Lower leg skin (tissue), 4 donors: ENCODE measurements at regions of chr3 and their contacts with region 1.

Region 1: GRCh38 chr3:66348704-66349103 is 127.9 kb downstream of the SLC25A26 start:
- DNase-seq: no peak
- H3K4me3 ChIP-seq: no peak overlapping the region
- CTCF ChIP-seq: no peak
- POLR2A ChIP-seq: no peak

Region 2: GRCh38 chr3:66253790-66254620 is 94.7 kb before region 1 on chr3:
- intact Hi-C with region 1: no loop called
- DNase-seq: no peak
- H3K4me3 ChIP-seq: no peak overlapping the region
- CTCF ChIP-seq: no peak
- POLR2A ChIP-seq: no peak

Region 3: GRCh38 chr3:68049776-68050175 is 1701.1 kb after region 1 on chr3:
- intact Hi-C with region 1: loop called (anchors 5 kb)
- DNase-seq: no peak
- H3K4me3 ChIP-seq: no peak overlapping the region
- CTCF ChIP-seq: no peak
- POLR2A ChIP-seq: no peak